ENCODE measurements at regions of chr1 and their contacts with region 1.

Region 1: DNA sequence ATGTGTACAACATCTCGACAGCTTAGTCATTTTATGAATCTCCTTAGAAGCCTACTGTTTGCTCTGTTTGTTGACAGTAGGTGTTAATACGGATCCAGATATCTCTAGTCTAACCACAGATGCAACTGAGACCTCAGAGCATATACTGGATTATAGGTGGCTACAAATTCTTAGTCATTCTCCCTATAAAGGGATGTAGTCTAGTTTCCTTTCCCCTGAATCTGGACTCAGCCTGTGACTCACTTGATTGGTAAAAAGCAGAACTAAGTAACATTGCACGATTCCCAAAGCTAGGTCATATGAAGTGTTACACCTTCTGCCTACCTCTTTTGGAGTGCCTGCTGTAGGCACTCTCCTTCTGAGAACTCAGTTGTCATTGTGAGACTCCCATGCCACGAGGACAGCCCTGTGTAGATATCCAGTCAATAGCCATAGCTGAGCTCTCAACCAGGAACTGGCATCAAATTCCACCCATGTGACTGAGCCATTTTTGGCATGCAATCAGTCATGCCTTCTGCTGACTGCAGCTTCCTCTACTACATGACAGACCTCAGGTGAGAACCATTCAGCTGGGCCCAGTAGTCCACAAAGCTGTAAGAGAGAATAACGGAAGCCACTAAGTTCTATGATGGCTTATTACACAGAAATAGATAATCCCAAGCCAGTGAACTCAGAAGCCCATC is 135.9 kb upstream of the CHRM3 start:
- DNase-seq: peak; percentile 98
- ATAC-seq: peak; percentile 97
- H3K4me3 ChIP-seq: no peak overlapping the region
- H3K27ac ChIP-seq: peak overlapping the region; percentile 92
- H3K4me1 ChIP-seq: peaks cover 40% of the 10 kb centered on the region
- H3K27me3 ChIP-seq: no peaks in the 10 kb centered on the region
- CTCF ChIP-seq: no peak

Region 2: DNA sequence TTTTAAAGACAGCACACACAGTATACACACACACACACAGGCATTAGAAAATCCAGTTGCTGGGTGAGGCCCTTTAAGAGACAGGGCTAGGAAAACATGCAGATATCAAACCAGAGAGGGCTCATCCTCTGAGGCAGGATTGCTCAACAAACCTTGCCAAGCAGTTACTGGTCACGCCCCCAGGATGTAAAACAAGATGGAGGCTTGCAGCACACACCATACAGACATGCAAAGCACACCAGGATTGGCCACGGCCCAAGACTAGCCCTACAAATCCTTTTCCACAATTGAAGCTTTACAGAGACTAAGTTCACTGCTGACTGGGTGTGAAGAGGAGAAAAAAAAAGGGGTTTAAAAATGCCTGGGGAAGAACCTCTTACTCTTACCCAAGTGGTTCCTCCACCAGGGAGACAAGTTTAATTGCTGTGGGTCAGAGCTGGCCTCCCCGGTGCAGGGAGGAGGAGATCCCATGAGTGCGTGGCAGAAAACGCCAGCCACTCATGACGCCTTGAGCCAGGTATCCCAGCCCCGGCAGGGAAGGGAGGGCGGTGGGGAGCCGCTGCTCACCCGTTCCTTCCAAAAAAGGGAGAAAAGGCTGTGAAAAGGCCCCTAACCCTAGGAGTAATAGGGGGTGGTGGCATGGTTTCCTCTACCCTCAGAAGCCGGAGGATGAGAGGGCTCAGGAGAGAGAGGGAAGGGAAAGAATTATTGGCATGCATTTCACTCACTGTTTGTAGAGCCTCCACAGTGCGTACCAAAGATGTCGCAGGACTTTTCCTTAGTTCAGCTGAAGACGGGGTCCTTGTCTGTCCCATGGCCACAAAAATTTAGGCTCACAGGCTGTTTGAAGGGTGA is 765.2 kb before region 1 on chr1:
- CTCF ChIA-PET with region 1: no interaction called
- POLR2A ChIA-PET with region 1: no interaction called
- intact Hi-C with region 1: loop called (anchors 10 kb)
- DNase-seq: peak; percentile 60
- ATAC-seq: peak; percentile 86
- H3K4me3 ChIP-seq: peak overlapping the region; percentile 78
- H3K27ac ChIP-seq: peak overlapping the region; percentile 52
- H3K4me1 ChIP-seq: peaks cover 16% of the 10 kb centered on the region
- H3K27me3 ChIP-seq: no peaks in the 10 kb centered on the region
- CTCF ChIP-seq: no peak

Region 3: GRCh38 chr1:239164451-239165180 is 85.9 kb before region 1 on chr1:
- CTCF ChIA-PET with region 1: no interaction called
- POLR2A ChIA-PET with region 1: no interaction called
- intact Hi-C with region 1: loop called (anchors 1 kb)
- DNase-seq: peak; percentile 97
- ATAC-seq: peak; percentile 46
- H3K4me3 ChIP-seq: no peak overlapping the region
- H3K27ac ChIP-seq: peak overlapping the region; percentile 38
- H3K4me1 ChIP-seq: peaks cover 26% of the 10 kb centered on the region
- H3K27me3 ChIP-seq: no peaks in the 10 kb centered on the region
- CTCF ChIP-seq: no peak

Region 4: GRCh38 chr1:239308701-239309333 is 58.3 kb after region 1 on chr1:
- CTCF ChIA-PET with region 1: no interaction called
- POLR2A ChIA-PET with region 1: no interaction called
- intact Hi-C with region 1: no loop called
- DNase-seq: peak; percentile 66
- ATAC-seq: peak; percentile 76
- H3K4me3 ChIP-seq: no peak overlapping the region
- H3K27ac ChIP-seq: no peak overlapping the region
- H3K4me1 ChIP-seq: peaks cover 9% of the 10 kb centered on the region
- H3K27me3 ChIP-seq: no peaks in the 10 kb centered on the region
- CTCF ChIP-seq: peak; percentile 91

Region 5: GRCh38 chr1:239386453-239387303 is 136.2 kb after region 1 on chr1 and contains the start of gene CHRM3:
- CTCF ChIA-PET with region 1: no interaction called
- POLR2A ChIA-PET with region 1: no interaction called
- intact Hi-C with region 1: loop called (anchors 1 kb)
- DNase-seq: peak; percentile 90
- ATAC-seq: peak; percentile 82
- H3K4me3 ChIP-seq: peak within 1 kb of the TSS; percentile 76
- H3K27ac ChIP-seq: 0 out of 2 replicates have a peak within 1 kb of the TSS, but pooled peaks have one; percentile 9
- H3K4me1 ChIP-seq: peaks cover 15% of the 10 kb centered on the region; the same call in 1 of the 2 replicates
- H3K27me3 ChIP-seq: peaks cover 30% of the 10 kb centered on the region
- CTCF ChIP-seq: peak; percentile 60
- total RNA-seq, gene CHRM3: 1.2 and 3.5 TPM in 2 replicates

Region 6: GRCh38 chr1:239603530-239603929 is 353.0 kb after region 1 on chr1:
- CTCF ChIA-PET with region 1: no interaction called
- POLR2A ChIA-PET with region 1: no interaction called
- intact Hi-C with region 1: loop called (anchors 5 kb)
- DNase-seq: peak; percentile 68
- ATAC-seq: peak; percentile 53
- H3K4me3 ChIP-seq: no peak overlapping the region
- H3K27ac ChIP-seq: peak overlapping the region; percentile 45
- H3K4me1 ChIP-seq: peaks cover 51% of the 10 kb centered on the region
- H3K27me3 ChIP-seq: no peaks in the 10 kb centered on the region
- CTCF ChIP-seq: no peak

Region 7: DNA sequence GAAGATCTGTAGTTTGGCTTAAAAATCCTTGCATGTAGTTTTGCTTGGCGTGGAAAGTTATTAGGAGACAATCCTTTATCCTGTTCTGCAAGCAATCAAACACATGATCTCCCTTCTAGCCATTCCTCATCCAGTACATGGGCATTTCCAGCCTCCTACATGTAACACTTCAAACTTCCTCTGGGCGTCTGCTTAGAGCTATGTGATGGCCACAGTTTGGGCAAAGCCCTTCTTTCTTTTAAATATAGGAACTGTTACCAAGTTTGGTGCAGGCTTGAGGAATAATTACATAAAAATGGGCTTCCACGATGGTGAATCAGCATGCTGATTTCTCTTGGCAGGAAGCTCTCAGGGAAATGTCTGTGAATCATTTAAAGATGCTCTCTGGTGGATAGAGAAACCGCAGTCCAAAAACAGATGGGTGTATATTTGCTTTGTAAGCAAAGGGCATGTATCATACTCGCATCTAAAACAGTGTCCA is 664.3 kb after region 1 on chr1:
- CTCF ChIA-PET with region 1: no interaction called
- POLR2A ChIA-PET with region 1: no interaction called
- intact Hi-C with region 1: loop called (anchors 5 kb)
- DNase-seq: peak; percentile 98
- ATAC-seq: peak; percentile 83
- H3K4me3 ChIP-seq: no peak overlapping the region
- H3K27ac ChIP-seq: peak overlapping the region; percentile 73
- H3K4me1 ChIP-seq: peaks cover 44% of the 10 kb centered on the region
- H3K27me3 ChIP-seq: no peaks in the 10 kb centered on the region
- CTCF ChIP-seq: peak; percentile 50